ENCODE measurements at regions of chr18 and their contacts with region 1.

Region 1: GRCh38 chr18:63936156-63936931 is 12.8 kb upstream of the HMSD start:
- DNase-seq: peak; percentile 94
- H3K4me3 ChIP-seq: peak overlapping the region; percentile 54 to 60 (median 54)
- H3K27ac ChIP-seq: no peak overlapping the region
- H3K4me1 ChIP-seq: peaks cover 5 to 12% (median 11%) of the 10 kb centered on the region in 4 donors
- H3K27me3 ChIP-seq: peaks cover 0 to 41% (median 2%) of the 10 kb centered on the region in 4 donors
- CTCF ChIP-seq: peak; percentile 62 to 72 (median 67)
- EP300 ChIP-seq: no peak
- POLR2A ChIP-seq: no peak

Region 2: GRCh38 chr18:63823518-63824219 is 112.7 kb before region 1 on chr18:
- intact Hi-C with region 1: loop called (anchors 5 kb)
- DNase-seq: no peak
- H3K4me3 ChIP-seq: no peak overlapping the region
- H3K27ac ChIP-seq: no peak overlapping the region
- H3K4me1 ChIP-seq: no peaks in the 10 kb centered on the region
- H3K27me3 ChIP-seq: peaks cover 0 to 6% (median 0%) of the 10 kb centered on the region in 4 donors
- CTCF ChIP-seq: peak in 2 of 3 experiments; percentile 11 to 21
- EP300 ChIP-seq: no peak
- POLR2A ChIP-seq: no peak

Measured in esophagus muscularis mucosa (tissue), 4 donors.